ENCODE measurements at regions of chr6 and their contacts with region 1.

Region 1: DNA sequence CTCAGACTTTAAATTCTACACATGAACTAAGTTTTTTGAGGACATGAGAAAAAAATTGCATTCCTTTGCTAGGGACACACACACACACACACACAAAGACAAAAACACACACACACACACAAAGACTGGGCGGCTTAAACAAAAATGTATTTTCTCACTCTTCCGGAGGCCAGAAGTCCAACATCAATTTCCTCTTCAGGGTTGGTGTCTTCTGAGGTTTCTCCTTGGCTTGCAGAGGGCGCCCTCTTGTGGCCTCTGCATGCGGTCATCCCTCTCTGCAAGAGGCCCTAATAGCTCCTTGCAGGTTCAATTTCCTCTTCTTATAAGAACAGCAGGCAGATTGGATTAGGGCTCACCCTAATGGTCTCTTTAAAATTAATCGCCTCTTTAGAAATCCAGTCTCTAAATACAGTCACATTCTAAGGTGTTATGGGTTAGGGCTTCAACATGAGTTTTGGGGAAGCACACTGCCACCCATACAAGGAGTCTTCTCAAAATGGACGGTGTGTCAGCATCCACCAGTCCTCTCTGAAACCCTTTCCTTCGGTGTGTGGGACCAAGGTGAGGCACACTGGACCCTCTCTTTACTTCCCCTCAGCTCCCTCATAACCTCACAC is 61.4 kb downstream of the GPR6 start:
- DNase-seq: peak; percentile 66 to 89 (median 76)
- ATAC-seq: peak; percentile 80
- H3K4me3 ChIP-seq: peak overlapping the region; percentile 47
- H3K4me3 Mint-ChIP-seq: peak overlapping the region; percentile 90
- H3K27ac ChIP-seq: peak overlapping the region; percentile 39 to 44
- H3K27ac Mint-ChIP-seq: peak overlapping the region; percentile 87
- H3K4me1 ChIP-seq: peaks cover 11% of the 10 kb centered on the region
- H3K4me1 Mint-ChIP-seq: peaks cover 13% of the 10 kb centered on the region
- H3K27me3 ChIP-seq: no peaks in the 10 kb centered on the region
- H3K27me3 Mint-ChIP-seq: no peaks in the 10 kb centered on the region
- CTCF ChIP-seq: peak; percentile 89

Region 2: GRCh38 chr6:109526905-109527628 is 512.4 kb before region 1 on chr6:
- CTCF ChIA-PET with region 1: interaction called, 3 read pairs
- POLR2A ChIA-PET with region 1: no interaction called
- intact Hi-C with region 1: loop called (anchors 1 to 2 kb)
- DNase-seq: peak in 13 of 14 experiments; percentile 9 to 78 (median 32)
- ATAC-seq: peak; percentile 61
- H3K4me3 ChIP-seq: no peak overlapping the region
- H3K4me3 Mint-ChIP-seq: no peak overlapping the region
- H3K27ac ChIP-seq: no peak overlapping the region
- H3K27ac Mint-ChIP-seq: no peak overlapping the region
- H3K4me1 ChIP-seq: peaks cover 4% of the 10 kb centered on the region
- H3K4me1 Mint-ChIP-seq: no peaks in the 10 kb centered on the region
- H3K27me3 ChIP-seq: no peaks in the 10 kb centered on the region
- H3K27me3 Mint-ChIP-seq: no peaks in the 10 kb centered on the region
- CTCF ChIP-seq: peak; percentile 75

Region 3: DNA sequence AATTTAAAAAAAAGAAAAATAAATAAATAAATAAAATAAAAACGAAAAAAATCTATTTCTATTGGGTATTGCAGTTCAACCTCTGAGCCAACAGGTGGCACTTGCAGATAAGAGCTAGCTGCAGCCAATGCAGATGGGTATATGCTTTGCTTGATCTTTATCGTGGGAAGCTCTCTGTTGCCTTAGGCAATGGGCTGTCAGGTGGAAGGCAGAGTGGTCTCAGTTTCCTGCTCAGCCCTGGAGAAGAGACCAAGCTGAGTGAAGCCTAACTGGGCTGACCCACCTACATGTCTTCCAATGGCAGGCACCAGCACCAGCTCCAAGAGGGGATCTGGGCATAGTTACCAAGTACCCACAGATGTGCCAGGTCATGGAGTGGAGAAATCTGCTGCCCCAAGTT is 443.5 kb before region 1 on chr6:
- CTCF ChIA-PET with region 1: no interaction called
- POLR2A ChIA-PET with region 1: interaction called, 3 read pairs
- intact Hi-C with region 1: loop called (anchors 1 to 2 kb)
- DNase-seq: peak in 5 of 14 experiments; percentile 7 to 45 (median 17)
- ATAC-seq: peak; percentile 82
- H3K4me3 ChIP-seq: no peak overlapping the region
- H3K4me3 Mint-ChIP-seq: no peak overlapping the region
- H3K27ac ChIP-seq: no peak overlapping the region
- H3K27ac Mint-ChIP-seq: no peak overlapping the region
- H3K4me1 ChIP-seq: no peaks in the 10 kb centered on the region
- H3K4me1 Mint-ChIP-seq: peaks cover 12% of the 10 kb centered on the region
- H3K27me3 ChIP-seq: no peaks in the 10 kb centered on the region
- H3K27me3 Mint-ChIP-seq: no peaks in the 10 kb centered on the region
- CTCF ChIP-seq: peak; percentile 45

Region 4: DNA sequence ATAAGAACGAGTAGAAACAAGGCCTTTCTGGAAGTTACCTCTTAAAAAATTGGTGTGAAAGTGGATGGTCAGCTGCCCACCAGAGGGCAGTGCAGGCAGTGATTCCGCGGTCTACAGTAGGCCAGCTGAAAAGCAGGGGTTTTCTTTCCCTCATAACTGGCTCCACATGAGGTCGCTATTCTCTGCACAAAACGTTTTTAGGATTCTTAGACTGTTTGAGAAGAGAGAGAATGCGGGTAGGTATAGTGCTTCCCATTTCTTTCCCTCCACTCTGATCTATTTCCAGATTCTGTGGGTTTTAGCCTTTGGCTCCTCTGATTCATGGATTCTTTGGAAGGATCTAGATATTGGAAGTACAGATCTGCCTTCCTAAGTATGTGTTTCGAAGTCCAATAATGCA is 334.2 kb before region 1 on chr6:
- CTCF ChIA-PET with region 1: interaction called, 27 read pairs
- POLR2A ChIA-PET with region 1: interaction called, 7 read pairs
- intact Hi-C with region 1: loop called (anchors 1 kb)
- DNase-seq: peak; percentile 51 to 88 (median 66)
- ATAC-seq: peak; percentile 97
- H3K4me3 ChIP-seq: no peak overlapping the region
- H3K4me3 Mint-ChIP-seq: no peak overlapping the region
- H3K27ac ChIP-seq: no peak overlapping the region
- H3K27ac Mint-ChIP-seq: no peak overlapping the region
- H3K4me1 ChIP-seq: no peaks in the 10 kb centered on the region
- H3K4me1 Mint-ChIP-seq: peaks cover 40% of the 10 kb centered on the region
- H3K27me3 ChIP-seq: no peaks in the 10 kb centered on the region
- H3K27me3 Mint-ChIP-seq: no peaks in the 10 kb centered on the region
- CTCF ChIP-seq: peak; percentile 91

Region 5: GRCh38 chr6:110029144-110029543 is 10.3 kb before region 1 on chr6:
- CTCF ChIA-PET with region 1: interaction called, 20 read pairs
- POLR2A ChIA-PET with region 1: interaction called, 3 read pairs
- intact Hi-C with region 1: no loop called
- DNase-seq: no peak
- ATAC-seq: no peak
- H3K4me3 ChIP-seq: no peak overlapping the region
- H3K4me3 Mint-ChIP-seq: no peak overlapping the region
- H3K27ac ChIP-seq: no peak overlapping the region
- H3K27ac Mint-ChIP-seq: no peak overlapping the region
- H3K4me1 ChIP-seq: no peaks in the 10 kb centered on the region
- H3K4me1 Mint-ChIP-seq: no peaks in the 10 kb centered on the region
- H3K27me3 ChIP-seq: no peaks in the 10 kb centered on the region
- H3K27me3 Mint-ChIP-seq: no peaks in the 10 kb centered on the region
- CTCF ChIP-seq: no peak

Region 6: GRCh38 chr6:110389689-110390382 is 350.4 kb after region 1 on chr6:
- CTCF ChIA-PET with region 1: no interaction called
- POLR2A ChIA-PET with region 1: interaction called, 13 read pairs
- intact Hi-C with region 1: loop called (anchors 1 to 5 kb)
- DNase-seq: no peak
- ATAC-seq: peak; percentile 23
- H3K4me3 ChIP-seq: no peak overlapping the region
- H3K4me3 Mint-ChIP-seq: no peak overlapping the region
- H3K27ac ChIP-seq: no peak overlapping the region
- H3K27ac Mint-ChIP-seq: peak overlapping the region; percentile 75
- H3K4me1 ChIP-seq: peaks cover 5% of the 10 kb centered on the region
- H3K4me1 Mint-ChIP-seq: peaks cover 27% of the 10 kb centered on the region
- H3K27me3 ChIP-seq: no peaks in the 10 kb centered on the region
- H3K27me3 Mint-ChIP-seq: no peaks in the 10 kb centered on the region
- CTCF ChIP-seq: no peak